Head of caudate nucleus (tissue), 42 donors: ENCODE measurements at regions of chr14 and their contacts with region 1.

Region 1: DNA sequence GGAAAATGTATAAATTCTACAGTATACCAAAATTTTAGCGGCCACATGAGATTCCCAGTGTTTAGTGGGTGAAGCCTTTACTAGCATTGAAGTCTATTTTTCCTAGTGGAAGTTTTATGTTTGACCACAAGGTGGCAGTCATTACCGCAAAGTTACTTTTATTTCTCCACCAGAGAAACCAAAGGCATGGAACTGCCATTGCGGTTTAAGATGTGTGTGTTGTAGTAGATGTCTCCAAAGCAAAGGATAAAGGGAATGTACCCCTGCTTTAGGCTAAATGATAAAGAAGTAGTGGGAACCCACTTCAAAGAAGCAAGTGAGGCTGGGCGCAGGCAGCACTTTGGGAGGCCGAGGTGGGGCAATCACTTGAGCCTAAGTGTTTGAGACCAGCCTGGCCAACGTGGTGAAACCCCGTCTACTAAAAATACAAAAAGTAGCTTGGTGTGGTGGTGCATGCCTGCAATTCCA is 140.5 kb downstream of the PRKCH start:
- DNase-seq: peak in 15 of 42 donors; percentile 37 to 83 (median 51)

Region 2: GRCh38 chr14:61147831-61148549 is 313.9 kb before region 1 on chr14:
- intact Hi-C with region 1: no loop called
- DNase-seq: peak; percentile 23 to 82 (median 57)

Region 3: DNA sequence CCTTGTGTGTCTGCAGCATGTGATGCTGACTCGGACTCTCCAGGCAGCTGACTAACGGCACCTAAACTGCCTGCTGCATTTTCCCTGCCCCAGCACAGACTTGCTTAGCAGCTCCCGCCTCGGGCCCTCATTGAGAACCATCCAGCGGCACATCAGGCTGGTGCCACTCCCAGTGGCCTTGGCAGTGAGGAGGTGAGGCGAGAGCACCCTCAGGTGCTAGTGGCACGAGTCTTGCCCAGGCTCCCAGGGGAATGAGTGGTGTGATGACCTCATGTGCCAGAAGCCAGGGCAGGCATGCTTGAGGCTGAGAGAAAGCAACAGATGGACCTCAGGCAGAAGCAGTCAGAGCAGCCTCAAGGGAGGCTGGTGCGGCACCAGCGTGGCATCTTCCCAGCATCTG is 80.3 kb before region 1 on chr14:
- intact Hi-C with region 1: no loop called
- DNase-seq: no peak

Region 4: GRCh38 chr14:61730756-61731373 is 269.0 kb after region 1 on chr14:
- intact Hi-C with region 1: loop called (anchors 2 kb)
- DNase-seq: peak in 1 of 42 donors; percentile 15

Region 5: GRCh38 chr14:61837336-61838229 is 375.7 kb after region 1 on chr14:
- intact Hi-C with region 1: loop called (anchors 5 kb)
- DNase-seq: peak; percentile 62 to 94 (median 84)